Right lobe of liver (tissue), 6 donors: ENCODE measurements at regions of chr17 and their contacts with region 1.

Region 1: GRCh38 chr17:1673041-1673785 is 11.5 kb downstream of the PRPF8 start:
- DNase-seq: no peak
- ATAC-seq: no peak
- H3K4me3 ChIP-seq: no peak overlapping the region
- H3K27ac ChIP-seq: no peak overlapping the region
- H3K4me1 ChIP-seq: no peaks in the 10 kb centered on the region
- H3K27me3 ChIP-seq: no peaks in the 10 kb centered on the region
- CTCF ChIP-seq: no peak
- POLR2A ChIP-seq: no peak

Region 2: GRCh38 chr17:1331708-1332107 is 341.5 kb before region 1 on chr17:
- intact Hi-C with region 1: no loop called
- DNase-seq: no peak
- ATAC-seq: peak in 1 of 4 donors; percentile 22
- H3K4me3 ChIP-seq: no peak overlapping the region
- H3K27ac ChIP-seq: no peak overlapping the region
- H3K4me1 ChIP-seq: no peaks in the 10 kb centered on the region
- H3K27me3 ChIP-seq: no peaks in the 10 kb centered on the region
- CTCF ChIP-seq: no peak
- POLR2A ChIP-seq: no peak

Region 3: DNA sequence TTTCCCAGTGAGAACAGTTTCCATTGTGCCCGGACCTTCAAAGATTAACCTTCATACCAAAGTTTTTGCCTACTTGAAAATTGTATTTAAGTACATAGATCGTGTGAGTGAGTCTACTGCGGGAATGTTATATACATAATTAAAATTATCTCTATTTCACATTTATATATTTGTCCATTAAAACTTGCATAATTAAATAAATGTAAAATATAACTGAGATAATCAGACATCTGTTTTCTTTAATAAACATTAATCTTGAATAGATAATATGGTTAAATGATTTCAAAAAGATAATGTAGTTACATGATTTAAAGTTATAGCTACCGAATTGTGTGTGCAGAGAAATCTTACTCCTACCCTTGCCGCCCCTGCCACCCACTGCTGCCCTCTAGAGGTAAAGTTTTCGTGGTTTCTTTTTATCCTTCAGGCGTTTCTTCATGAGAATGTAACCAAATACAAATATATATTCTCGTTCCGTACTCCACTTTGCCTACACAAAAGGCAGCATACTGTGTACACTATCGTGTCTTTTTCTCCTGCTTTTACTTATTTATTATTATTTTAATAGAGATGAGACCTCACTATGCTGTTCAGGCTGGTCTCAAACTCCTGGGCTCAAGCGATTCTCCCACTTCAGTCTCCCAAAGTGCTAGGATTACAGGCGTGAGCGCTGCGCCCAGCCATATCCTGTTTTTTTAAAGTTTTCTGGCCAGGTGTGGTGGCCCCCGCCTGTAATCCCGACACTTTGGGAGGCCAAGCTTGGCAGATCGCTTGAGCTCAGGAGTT is 192.2 kb after region 1 on chr17:
- intact Hi-C with region 1: loop called in 1 of 2 experiments (anchors 10 kb)
- DNase-seq: no peak
- ATAC-seq: peak; percentile 73 to 89 (median 84)
- H3K4me3 ChIP-seq: no peak overlapping the region
- H3K27ac ChIP-seq: no peak overlapping the region
- H3K4me1 ChIP-seq: no peaks in the 10 kb centered on the region
- H3K27me3 ChIP-seq: no peaks in the 10 kb centered on the region
- CTCF ChIP-seq: peak; percentile 59 to 83 (median 76)
- POLR2A ChIP-seq: no peak